CD4-positive, alpha-beta T cell (primary cell): ENCODE measurements at regions of chr3 and their contacts with region 1.

Region 1: GRCh38 chr3:187738331-187739093 is 6.8 kb downstream of the BCL6 start:
- DNase-seq: peak; percentile 48 to 85 (median 57)
- ATAC-seq: peak; percentile 48
- H3K4me3 ChIP-seq: peak overlapping the region; percentile 96
- H3K4me3 Mint-ChIP-seq: peak overlapping the region; percentile 100
- H3K27ac ChIP-seq: peak overlapping the region in 1 of 2 donors; percentile 56
- H3K27ac Mint-ChIP-seq: peak overlapping the region; percentile 99
- H3K4me1 ChIP-seq: peaks cover 65% of the 10 kb centered on the region
- H3K4me1 Mint-ChIP-seq: peaks cover 51% of the 10 kb centered on the region
- H3K27me3 ChIP-seq: no peaks in the 10 kb centered on the region
- H3K27me3 Mint-ChIP-seq: no peaks in the 10 kb centered on the region
- CTCF ChIP-seq: peak; percentile 91

Region 2: GRCh38 chr3:187544296-187544695 is 194.2 kb before region 1 on chr3:
- CTCF ChIA-PET with region 1: no interaction called
- POLR2A ChIA-PET with region 1: no interaction called
- intact Hi-C with region 1: no loop called
- DNase-seq: no peak
- ATAC-seq: no peak
- H3K4me3 ChIP-seq: no peak overlapping the region
- H3K4me3 Mint-ChIP-seq: no peak overlapping the region
- H3K27ac ChIP-seq: no peak overlapping the region
- H3K27ac Mint-ChIP-seq: no peak overlapping the region
- H3K4me1 ChIP-seq: no peaks in the 10 kb centered on the region
- H3K4me1 Mint-ChIP-seq: no peaks in the 10 kb centered on the region
- H3K27me3 ChIP-seq: peaks cover 0 to 12% of the 10 kb centered on the region in 2 experiments
- H3K27me3 Mint-ChIP-seq: peaks cover 19% of the 10 kb centered on the region
- CTCF ChIP-seq: no peak

Region 3: DNA sequence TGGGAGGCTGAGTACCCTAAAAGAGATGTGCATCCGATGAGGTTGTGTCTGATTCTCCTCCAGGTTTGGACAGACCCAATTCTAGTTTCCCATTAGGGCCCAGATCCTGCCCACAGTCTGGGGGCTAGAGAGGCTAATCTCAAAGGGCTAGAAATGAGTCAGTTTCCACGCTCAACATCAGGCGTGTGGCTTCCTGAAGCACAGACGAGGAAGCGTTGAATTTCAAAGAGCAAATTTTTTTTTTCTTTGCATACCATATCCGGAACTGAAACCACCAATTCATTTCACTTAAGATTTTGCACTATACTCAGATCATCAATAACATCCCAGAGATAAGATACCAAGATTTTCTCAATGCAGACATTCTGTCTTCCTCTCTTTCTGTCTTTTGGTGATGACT is 180.5 kb after region 1 on chr3:
- CTCF ChIA-PET with region 1: interaction called, 5 read pairs
- POLR2A ChIA-PET with region 1: no interaction called
- intact Hi-C with region 1: loop called in 1 of 2 experiments (anchors 2 kb)
- DNase-seq: peak; percentile 20 to 84 (median 45)
- ATAC-seq: peak; percentile 87
- H3K4me3 ChIP-seq: peak overlapping the region; percentile 30
- H3K4me3 Mint-ChIP-seq: peak overlapping the region; percentile 82
- H3K27ac ChIP-seq: peak overlapping the region; percentile 8 to 53
- H3K27ac Mint-ChIP-seq: peak overlapping the region; percentile 85
- H3K4me1 ChIP-seq: peaks cover 22% of the 10 kb centered on the region
- H3K4me1 Mint-ChIP-seq: peaks cover 56% of the 10 kb centered on the region
- H3K27me3 ChIP-seq: no peaks in the 10 kb centered on the region
- H3K27me3 Mint-ChIP-seq: no peaks in the 10 kb centered on the region
- CTCF ChIP-seq: no peak

Region 4: DNA sequence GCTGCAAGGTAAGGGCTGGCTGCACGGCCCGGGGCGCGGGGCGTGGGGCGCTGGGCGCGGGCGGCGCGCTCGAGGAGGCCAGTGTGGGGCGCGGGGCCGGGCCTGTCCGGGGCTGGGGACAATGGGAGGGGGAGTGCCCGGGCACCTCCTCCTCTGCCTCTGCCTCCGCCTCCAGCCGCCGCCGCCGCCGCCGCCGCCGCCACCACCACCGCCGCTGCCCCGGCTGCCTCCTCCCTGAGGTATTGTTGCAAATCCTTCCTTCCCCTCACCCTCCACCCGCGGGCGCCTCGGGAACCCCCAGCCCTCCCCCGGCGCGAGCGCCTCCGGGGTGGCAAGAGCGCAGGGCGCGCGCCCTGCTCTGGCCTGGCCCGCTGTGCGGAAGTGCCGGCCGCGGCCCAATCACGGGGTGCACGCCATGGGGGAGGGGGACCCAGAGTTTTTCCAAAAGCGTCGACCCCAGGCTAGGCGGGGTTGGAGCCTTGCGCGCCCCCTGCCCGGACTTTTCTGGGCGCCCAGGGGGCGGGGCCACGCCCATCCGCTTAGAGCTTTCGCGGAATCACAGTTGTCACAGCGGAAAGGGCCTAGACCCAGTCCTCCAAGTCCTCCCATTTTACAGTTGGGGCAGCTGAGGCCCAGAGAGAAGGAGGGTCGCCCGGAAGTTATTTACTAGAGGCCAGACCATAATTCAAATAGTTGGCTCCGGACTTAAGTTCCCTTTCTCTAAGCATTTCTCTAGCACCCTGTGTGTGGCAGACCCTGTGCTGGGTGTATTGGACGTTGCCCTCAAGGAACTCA is 415.7 kb after region 1 on chr3 and contains the start of gene LPP:
- CTCF ChIA-PET with region 1: interaction called, 32 read pairs
- POLR2A ChIA-PET with region 1: interaction called, 20 read pairs
- intact Hi-C with region 1: no loop called
- DNase-seq: peak; percentile 60 to 94 (median 76)
- ATAC-seq: peak; percentile 83
- H3K4me3 ChIP-seq: peak within 1 kb of the TSS; percentile 87
- H3K4me3 Mint-ChIP-seq: peak within 1 kb of the TSS; percentile 96
- H3K27ac ChIP-seq: peak within 1 kb of the TSS; percentile 76 to 85
- H3K27ac Mint-ChIP-seq: peak within 1 kb of the TSS; percentile 91
- H3K4me1 ChIP-seq: peaks cover 46% of the 10 kb centered on the region
- H3K4me1 Mint-ChIP-seq: peaks cover 57% of the 10 kb centered on the region
- H3K27me3 ChIP-seq: no peaks in the 10 kb centered on the region
- H3K27me3 Mint-ChIP-seq: no peaks in the 10 kb centered on the region
- CTCF ChIP-seq: no peak
- total RNA-seq, gene LPP: 45.6 to 45.9 TPM

Region 5: GRCh38 chr3:188200481-188200880 is 462.0 kb after region 1 on chr3:
- CTCF ChIA-PET with region 1: no interaction called
- POLR2A ChIA-PET with region 1: no interaction called
- intact Hi-C with region 1: no loop called
- DNase-seq: no peak
- ATAC-seq: no peak
- H3K4me3 ChIP-seq: no peak overlapping the region
- H3K4me3 Mint-ChIP-seq: no peak overlapping the region
- H3K27ac ChIP-seq: no peak overlapping the region
- H3K27ac Mint-ChIP-seq: no peak overlapping the region
- H3K4me1 ChIP-seq: peaks cover 6% of the 10 kb centered on the region
- H3K4me1 Mint-ChIP-seq: peaks cover 32% of the 10 kb centered on the region
- H3K27me3 ChIP-seq: no peaks in the 10 kb centered on the region
- H3K27me3 Mint-ChIP-seq: no peaks in the 10 kb centered on the region
- CTCF ChIP-seq: no peak

Region 6: DNA sequence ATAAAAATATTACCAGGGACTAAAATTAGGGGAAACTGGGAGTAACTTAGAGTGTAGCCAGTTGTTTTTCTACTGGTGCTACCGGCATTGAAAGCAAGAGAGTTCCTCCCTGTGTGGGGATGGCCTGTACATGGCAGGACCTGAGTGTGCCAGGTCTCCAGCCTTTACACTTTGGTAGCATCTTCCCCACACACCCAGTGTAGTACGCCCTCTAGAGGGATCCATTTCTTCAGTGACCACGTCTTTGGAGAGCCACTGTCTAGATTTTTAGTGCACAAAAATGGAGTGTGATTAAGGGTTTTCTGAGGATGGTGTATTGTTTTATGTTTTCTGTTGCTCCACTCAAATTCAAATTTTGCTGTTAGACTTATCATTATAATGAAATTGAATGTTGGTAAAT is 926.3 kb after region 1 on chr3:
- CTCF ChIA-PET with region 1: interaction called, 3 read pairs
- POLR2A ChIA-PET with region 1: no interaction called
- intact Hi-C with region 1: loop called in 1 of 2 experiments (anchors 5 kb)
- DNase-seq: peak in 5 of 14 experiments; percentile 0 to 45 (median 16)
- ATAC-seq: no peak
- H3K4me3 ChIP-seq: no peak overlapping the region
- H3K4me3 Mint-ChIP-seq: no peak overlapping the region
- H3K27ac ChIP-seq: no peak overlapping the region
- H3K27ac Mint-ChIP-seq: no peak overlapping the region
- H3K4me1 ChIP-seq: no peaks in the 10 kb centered on the region
- H3K4me1 Mint-ChIP-seq: no peaks in the 10 kb centered on the region
- H3K27me3 ChIP-seq: no peaks in the 10 kb centered on the region
- H3K27me3 Mint-ChIP-seq: no peaks in the 10 kb centered on the region
- CTCF ChIP-seq: no peak

Region 7: GRCh38 chr3:188830893-188831292 is 1092.4 kb after region 1 on chr3:
- CTCF ChIA-PET with region 1: no interaction called
- POLR2A ChIA-PET with region 1: no interaction called
- intact Hi-C with region 1: loop called in 1 of 2 experiments (anchors 5 kb)
- DNase-seq: peak in 3 of 14 experiments; percentile 4 to 28 (median 21)
- ATAC-seq: no peak
- H3K4me3 ChIP-seq: no peak overlapping the region
- H3K4me3 Mint-ChIP-seq: no peak overlapping the region
- H3K27ac ChIP-seq: no peak overlapping the region
- H3K27ac Mint-ChIP-seq: no peak overlapping the region
- H3K4me1 ChIP-seq: peaks cover 9% of the 10 kb centered on the region
- H3K4me1 Mint-ChIP-seq: peaks cover 20% of the 10 kb centered on the region
- H3K27me3 ChIP-seq: no peaks in the 10 kb centered on the region
- H3K27me3 Mint-ChIP-seq: no peaks in the 10 kb centered on the region
- CTCF ChIP-seq: peak; percentile 22

Region 8: DNA sequence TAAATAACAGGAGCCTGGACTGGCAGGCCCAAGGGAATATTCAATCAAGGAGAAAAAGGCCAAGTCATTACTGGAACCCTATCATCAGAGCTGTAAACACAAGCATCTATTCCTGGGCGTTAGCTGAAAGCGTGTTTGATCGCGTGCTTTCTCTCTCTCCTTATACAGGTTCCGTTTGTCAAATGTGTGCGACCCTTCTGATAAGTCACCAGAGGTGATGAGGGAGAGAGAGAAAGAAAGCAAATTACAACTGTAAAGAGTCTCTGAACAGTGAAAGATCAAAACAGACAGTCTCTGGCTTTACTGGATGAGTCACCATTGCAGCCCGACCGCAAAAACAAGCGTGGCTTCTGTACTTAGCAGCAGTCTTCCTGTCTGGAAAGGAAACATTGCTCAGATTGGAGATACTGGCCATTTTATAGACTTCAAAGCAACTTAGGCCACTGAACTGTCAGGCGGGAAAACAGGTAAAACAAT is 1393.8 kb after region 1 on chr3:
- CTCF ChIA-PET with region 1: interaction called, 5 read pairs
- POLR2A ChIA-PET with region 1: interaction called, 17 read pairs
- intact Hi-C with region 1: no loop called
- DNase-seq: peak; percentile 36 to 93 (median 72)
- ATAC-seq: peak; percentile 96
- H3K4me3 ChIP-seq: peak overlapping the region; percentile 10
- H3K4me3 Mint-ChIP-seq: peak overlapping the region; percentile 56
- H3K27ac ChIP-seq: peak overlapping the region; percentile 30 to 74
- H3K27ac Mint-ChIP-seq: peak overlapping the region; percentile 97
- H3K4me1 ChIP-seq: peaks cover 27% of the 10 kb centered on the region
- H3K4me1 Mint-ChIP-seq: peaks cover 23% of the 10 kb centered on the region
- H3K27me3 ChIP-seq: no peaks in the 10 kb centered on the region
- H3K27me3 Mint-ChIP-seq: no peaks in the 10 kb centered on the region
- CTCF ChIP-seq: no peak

Region 9: DNA sequence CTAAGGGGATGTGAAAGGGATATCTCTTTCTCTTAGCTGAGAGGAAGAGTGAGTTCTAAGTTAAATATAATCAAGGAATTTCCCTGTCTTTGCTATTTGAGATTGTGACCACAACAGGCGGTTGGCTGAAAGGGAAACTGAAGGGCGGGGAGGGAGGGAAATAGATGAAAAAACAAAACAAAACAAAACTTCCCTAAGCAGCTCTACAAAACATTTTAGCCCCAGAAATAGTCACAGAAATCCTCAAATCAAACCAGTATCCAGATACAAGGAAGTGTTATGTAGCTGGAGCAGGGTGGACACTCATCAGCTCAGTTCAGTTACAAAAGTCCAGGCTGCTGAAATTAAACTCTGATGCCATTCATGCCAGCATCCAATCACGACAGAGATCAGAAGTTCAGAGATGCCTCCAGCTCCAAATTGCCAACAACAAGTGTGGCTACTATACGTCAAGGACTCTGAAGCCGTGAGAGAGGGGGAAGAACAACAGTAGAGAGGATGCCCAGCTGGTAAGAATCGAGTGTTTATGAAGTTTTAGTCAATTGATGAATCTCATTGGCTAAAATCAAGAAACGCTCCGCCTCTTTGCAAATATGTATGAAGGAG is 1892.4 kb after region 1 on chr3:
- CTCF ChIA-PET with region 1: no interaction called
- POLR2A ChIA-PET with region 1: no interaction called
- intact Hi-C with region 1: loop called in 1 of 2 experiments (anchors 5 kb)
- DNase-seq: peak in 3 of 14 experiments; percentile 39 to 43 (median 42)
- ATAC-seq: peak; percentile 29
- H3K4me3 ChIP-seq: peak overlapping the region; percentile 29
- H3K4me3 Mint-ChIP-seq: no peak overlapping the region
- H3K27ac ChIP-seq: no peak overlapping the region
- H3K27ac Mint-ChIP-seq: no peak overlapping the region
- H3K4me1 ChIP-seq: no peaks in the 10 kb centered on the region
- H3K4me1 Mint-ChIP-seq: peaks cover 23% of the 10 kb centered on the region
- H3K27me3 ChIP-seq: no peaks in the 10 kb centered on the region
- H3K27me3 Mint-ChIP-seq: no peaks in the 10 kb centered on the region
- CTCF ChIP-seq: no peak